ENCODE measurements at regions of chr13 and their contacts with region 1.

Region 1: GRCh38 chr13:20703780-20704445 is 414 bp downstream of the IL17D start:
- DNase-seq: peak; percentile 66 to 87
- H3K4me3 ChIP-seq: no peak overlapping the region; the same call in 1 of the 2 replicates
- H3K27ac ChIP-seq: no peak overlapping the region
- H3K4me1 ChIP-seq: peaks cover 14% of the 10 kb centered on the region
- H3K27me3 ChIP-seq: no peaks in the 10 kb centered on the region
- CTCF ChIP-seq: no peak; the same call in 1 of the 2 replicates

Region 2: DNA sequence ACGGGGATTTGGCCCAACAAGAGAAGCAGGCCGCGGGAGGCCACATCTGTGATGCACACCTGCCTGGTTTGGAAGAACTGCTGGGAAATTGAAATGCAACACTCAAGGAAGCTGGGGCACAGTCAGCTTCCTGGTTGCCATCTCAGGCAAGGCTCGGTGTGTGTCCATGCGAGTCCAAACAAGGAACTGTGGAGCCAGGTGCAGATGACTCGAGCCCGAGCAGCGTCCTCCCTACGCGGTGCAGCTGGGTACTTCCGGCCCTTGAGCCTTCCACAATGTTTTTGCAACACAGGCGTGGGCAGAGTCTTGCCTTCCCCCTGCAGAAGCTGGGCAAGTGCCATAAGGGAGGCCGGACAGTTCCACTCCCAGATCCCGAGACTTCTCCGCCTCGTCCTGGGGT is 272.8 kb before region 1 on chr13:
- CTCF ChIA-PET with region 1: no interaction called
- POLR2A ChIA-PET with region 1: interaction called, 28 read pairs
- intact Hi-C with region 1: no loop called
- DNase-seq: peak in 1 of 2 experiments; percentile 27
- H3K4me3 ChIP-seq: no peak overlapping the region
- H3K27ac ChIP-seq: no peak overlapping the region
- H3K4me1 ChIP-seq: no peaks in the 10 kb centered on the region
- H3K27me3 ChIP-seq: no peaks in the 10 kb centered on the region
- CTCF ChIP-seq: no peak

Region 3: GRCh38 chr13:20686863-20687579 is 16.9 kb before region 1 on chr13:
- CTCF ChIA-PET with region 1: no interaction called
- POLR2A ChIA-PET with region 1: no interaction called
- intact Hi-C with region 1: no loop called
- DNase-seq: no peak
- H3K4me3 ChIP-seq: no peak overlapping the region
- H3K27ac ChIP-seq: no peak overlapping the region
- H3K4me1 ChIP-seq: no peaks in the 10 kb centered on the region
- H3K27me3 ChIP-seq: no peaks in the 10 kb centered on the region
- CTCF ChIP-seq: no peak

Measured in PC-9 (cell line).